Mucosa of descending colon (tissue), 3 donors: ENCODE measurements at regions of chr12 and their contacts with region 1.

Region 1: GRCh38 chr12:89051065-89051677 is 301.1 kb downstream of the DUSP6 start:
- DNase-seq: peak in 1 of 3 donors; percentile 70
- ATAC-seq: peak; percentile 74
- H3K4me3 ChIP-seq: no peak overlapping the region
- H3K4me1 ChIP-seq: no peaks in the 10 kb centered on the region
- CTCF ChIP-seq: peak; percentile 89

Region 2: DNA sequence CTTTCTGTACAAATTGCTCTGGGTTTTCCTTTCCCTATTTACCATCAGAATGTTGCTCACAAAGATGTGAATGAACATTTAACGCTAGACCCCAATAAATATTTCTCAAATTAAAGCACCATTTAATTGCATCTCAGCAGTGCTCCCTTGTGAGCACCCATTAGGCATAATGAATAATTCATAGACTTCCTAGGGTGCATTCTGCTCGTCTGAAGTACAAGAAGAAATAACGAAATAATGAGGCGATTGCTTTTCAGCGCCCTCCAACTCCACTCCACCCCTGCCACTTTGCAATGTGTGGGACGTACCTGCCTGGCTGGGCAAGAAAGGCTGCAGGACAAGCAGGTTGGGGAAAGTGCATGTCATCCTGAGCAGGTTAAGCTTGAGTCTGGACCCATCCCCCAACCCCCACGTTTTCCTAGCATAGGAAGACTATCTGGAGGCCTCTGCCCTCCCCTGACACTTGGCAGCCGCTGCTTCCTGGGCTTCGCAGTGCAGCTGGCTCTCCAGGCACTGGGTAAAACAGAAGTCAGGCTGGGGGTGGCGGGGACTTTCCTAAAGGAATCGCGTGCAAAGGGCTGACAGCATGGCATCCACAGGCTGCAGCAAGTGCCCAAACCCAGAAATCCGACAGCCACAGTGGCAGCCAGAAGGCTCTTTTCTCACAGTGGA is 47.4 kb after region 1 on chr12:
- intact Hi-C with region 1: no loop called
- DNase-seq: peak in 1 of 3 donors; percentile 39
- ATAC-seq: no peak
- H3K4me3 ChIP-seq: no peak overlapping the region
- H3K4me1 ChIP-seq: no peaks in the 10 kb centered on the region
- CTCF ChIP-seq: no peak

Region 3: GRCh38 chr12:89345830-89346740 is 294.9 kb after region 1 on chr12:
- intact Hi-C with region 1: loop called in 1 of 2 experiments (anchors 10 kb)
- DNase-seq: peak; percentile 44 to 71 (median 71)
- ATAC-seq: peak; percentile 79
- H3K4me3 ChIP-seq: no peak overlapping the region
- H3K4me1 ChIP-seq: peaks cover 17% of the 10 kb centered on the region
- CTCF ChIP-seq: no peak

Region 4: GRCh38 chr12:89461649-89462612 is 410.8 kb after region 1 on chr12:
- intact Hi-C with region 1: loop called (anchors 2 to 10 kb)
- DNase-seq: no peak
- ATAC-seq: peak; percentile 94
- H3K4me3 ChIP-seq: no peak overlapping the region
- H3K4me1 ChIP-seq: peaks cover 14% of the 10 kb centered on the region
- CTCF ChIP-seq: no peak

Region 5: DNA sequence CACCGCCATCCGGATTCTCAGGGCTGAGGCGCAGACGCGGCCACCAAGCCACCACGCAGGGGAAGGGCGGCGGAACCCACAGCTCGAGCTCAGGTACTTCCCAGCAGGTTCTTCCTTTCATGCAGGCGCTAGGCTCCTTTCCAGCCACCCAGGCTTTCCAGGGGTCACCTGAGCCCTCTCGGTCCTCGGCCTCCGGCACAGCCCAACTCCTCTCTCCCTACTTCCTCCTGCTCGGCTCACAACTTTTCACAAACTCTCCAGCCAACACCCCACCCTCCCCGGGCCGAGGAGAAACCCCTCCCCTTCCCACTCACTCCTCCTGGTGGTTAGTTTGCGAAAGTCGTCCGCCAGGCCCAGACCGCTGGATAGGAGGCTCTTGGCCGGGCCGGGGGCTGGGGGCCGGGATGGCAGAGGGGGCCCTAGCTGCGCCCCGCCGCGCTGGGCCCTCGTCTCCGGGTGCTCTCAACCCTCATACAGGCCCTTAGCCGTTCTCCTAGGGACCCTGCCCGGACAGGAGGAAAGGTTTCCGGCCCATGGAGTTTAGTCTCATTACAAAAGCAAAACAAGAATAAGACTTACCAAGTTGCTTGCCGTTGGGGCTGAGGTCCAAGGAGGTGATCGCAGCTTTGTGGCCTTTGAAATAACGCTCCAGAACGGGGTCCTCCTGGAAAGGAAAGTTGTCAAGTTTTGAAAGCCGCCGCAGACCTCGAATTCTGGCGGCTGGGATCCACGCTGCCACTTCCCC is 473.5 kb after region 1 on chr12 and contains the start of gene GALNT4:
- intact Hi-C with region 1: loop called in 1 of 2 experiments (anchors 10 kb)
- DNase-seq: peak; percentile 91 to 93 (median 93)
- ATAC-seq: peak; percentile 88
- H3K4me3 ChIP-seq: peak within 1 kb of the TSS; percentile 82
- H3K4me1 ChIP-seq: peaks cover 14% of the 10 kb centered on the region
- CTCF ChIP-seq: peak; percentile 28
- total RNA-seq, gene GALNT4: 19.3 to 49.6 (median 41.9) TPM